ENCODE measurements at regions of chr19 and their contacts with region 1.

Region 1: GRCh38 chr19:23872282-23872919 is 42.3 kb upstream of the ZNF726 start:
- ATAC-seq: no peak
- H3K4me3 ChIP-seq: no peak overlapping the region
- H3K27ac ChIP-seq: no peak overlapping the region
- H3K4me1 ChIP-seq: no peaks in the 10 kb centered on the region

Region 2: DNA sequence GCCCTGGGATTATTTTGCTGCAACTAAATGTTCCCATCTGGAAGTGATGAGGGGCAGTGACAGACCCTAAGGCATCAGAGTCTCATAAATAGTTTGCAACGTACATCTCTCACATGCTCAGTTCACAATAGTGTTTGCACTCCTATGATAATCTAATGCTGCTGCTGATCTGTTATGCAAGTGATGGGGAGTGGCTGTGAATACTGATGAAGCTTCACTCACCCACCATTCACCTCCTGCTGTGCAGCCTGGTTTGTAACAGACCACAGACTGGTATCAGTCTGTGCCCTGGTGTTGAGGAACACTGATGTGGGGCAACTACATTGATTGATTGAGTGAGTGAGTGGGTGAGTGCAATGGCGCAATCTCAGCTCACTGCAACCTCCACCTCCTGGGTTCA is 97.2 kb after region 1 on chr19:
- in situ Hi-C with region 1: loop called in 3 of 9 experiments (anchors 5 kb)
- ATAC-seq: peak in 3 of 8 experiments; percentile 63 to 72 (median 68)
- H3K4me3 ChIP-seq: no peak overlapping the region
- H3K27ac ChIP-seq: no peak overlapping the region
- H3K4me1 ChIP-seq: no peaks in the 10 kb centered on the region